Caki2 (cell line): ENCODE measurements at regions of chr5 and their contacts with region 1.

Region 1: DNA sequence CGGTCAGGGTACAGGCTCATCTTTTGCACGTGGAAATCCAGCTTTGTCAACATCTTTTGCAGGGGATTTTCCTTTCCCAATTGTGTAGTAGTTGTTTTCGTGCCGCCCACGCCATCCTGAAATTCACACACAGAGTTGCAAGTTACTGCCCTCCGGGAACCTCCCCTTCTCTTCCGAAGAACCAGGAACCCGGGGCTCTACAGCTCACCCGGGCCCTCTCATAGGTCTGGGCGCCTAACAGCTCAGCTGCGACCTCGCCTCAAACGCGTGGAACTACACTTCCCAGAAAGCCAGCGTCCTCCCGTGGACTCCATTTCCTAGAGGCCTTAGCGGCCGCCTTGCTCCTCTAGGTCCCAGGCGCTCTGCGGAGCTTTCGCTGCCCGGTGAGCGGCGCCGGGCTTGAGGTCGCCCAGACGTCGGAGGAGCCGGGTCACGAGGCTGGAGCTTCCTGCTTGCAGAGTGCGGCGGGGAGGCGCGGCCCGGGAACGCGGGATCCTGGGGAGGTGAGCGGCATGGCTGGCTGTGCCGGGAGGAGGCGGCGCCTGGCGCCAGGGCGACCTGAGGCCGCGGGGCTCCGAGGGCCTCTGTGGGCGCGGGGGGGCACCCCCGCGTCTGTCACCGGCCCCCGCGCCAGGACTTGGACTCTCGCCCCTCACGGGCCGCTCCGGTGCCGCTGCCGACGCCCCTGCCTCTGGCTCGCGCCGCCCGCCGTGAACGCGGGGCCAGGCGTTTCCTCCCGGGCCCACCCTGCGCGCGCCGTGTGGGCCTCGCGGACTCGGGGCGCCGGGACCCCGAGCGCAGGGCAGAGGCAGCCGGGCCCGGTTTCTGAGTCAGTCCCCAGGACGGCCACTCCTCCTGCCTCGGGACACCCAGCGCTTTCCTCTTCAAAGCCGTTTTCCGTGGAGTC is at the start of gene ZNF354B:
- DNase-seq: peak; percentile 95
- total RNA-seq, gene ZNF354B: 2.9 and 3.4 TPM in 2 replicates

Region 2: DNA sequence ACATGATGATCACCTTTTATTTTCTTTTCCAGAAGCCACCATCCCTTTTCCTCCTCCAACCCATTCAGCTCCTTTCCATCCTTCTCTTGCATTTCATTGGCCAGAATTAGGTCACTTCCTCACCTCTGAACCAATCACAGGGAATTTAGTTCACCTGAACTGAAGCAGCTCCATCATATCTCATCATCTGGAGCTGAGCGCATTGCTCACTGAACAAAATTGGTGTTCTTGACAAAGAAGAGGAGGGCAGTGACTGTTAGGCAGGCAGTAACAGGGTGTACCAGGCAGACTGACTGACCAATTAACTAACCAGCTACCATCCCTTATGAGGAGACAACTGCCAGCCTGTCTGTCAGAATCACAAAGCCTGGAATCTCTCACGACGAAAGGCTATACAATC is 127.6 kb before region 1 on chr5:
- in situ Hi-C with region 1: loop called (anchors 10 kb)
- DNase-seq: no peak

Region 3: GRCh38 chr5:178793151-178793550 is 66.7 kb before region 1 on chr5:
- in situ Hi-C with region 1: no loop called
- DNase-seq: no peak

Region 4: GRCh38 chr5:178818094-178818493 is 41.8 kb before region 1 on chr5:
- in situ Hi-C with region 1: no loop called
- DNase-seq: no peak